ENCODE measurements at regions of chr6 and their contacts with region 1.

Region 1: DNA sequence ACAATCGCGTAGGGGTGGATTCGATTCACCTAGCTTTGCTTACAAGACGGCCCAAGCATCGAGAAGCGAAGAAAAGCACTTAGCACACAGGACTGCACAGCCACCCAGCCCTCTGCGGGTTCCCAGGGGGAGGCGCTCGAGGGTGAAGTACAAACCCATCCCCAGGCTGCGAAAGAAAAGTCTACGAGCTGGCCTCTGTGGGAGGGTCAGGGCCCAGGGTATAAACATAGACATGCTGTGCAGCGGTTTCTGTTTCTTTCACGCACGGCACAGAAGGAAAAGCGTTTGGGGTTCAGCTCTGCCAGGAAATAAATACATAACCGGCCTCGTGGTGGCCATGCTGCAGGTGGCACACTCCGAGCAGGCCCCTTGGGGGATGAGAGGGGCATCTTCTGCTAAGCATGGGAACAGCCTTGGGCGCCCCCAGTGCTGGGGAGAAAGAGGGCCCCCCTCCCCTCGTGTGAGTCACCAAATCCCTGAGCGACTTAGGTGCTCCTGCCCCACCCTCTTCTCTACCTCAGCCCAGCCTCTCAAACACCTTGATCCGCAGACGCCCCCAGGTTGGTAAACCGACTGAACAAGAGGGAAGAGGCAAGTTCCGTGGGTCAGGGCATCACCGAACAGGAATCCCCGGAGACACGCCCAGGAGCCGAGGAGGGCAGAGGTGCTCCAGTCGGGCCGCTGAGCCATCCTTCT is 91.6 kb upstream of the RIPOR2 start:
- DNase-seq: peak; percentile 92
- H3K4me3 Mint-ChIP-seq: peak overlapping the region; percentile 70
- H3K27ac Mint-ChIP-seq: peak overlapping the region; percentile 96
- H3K4me1 Mint-ChIP-seq: peaks cover 75% of the 10 kb centered on the region
- H3K27me3 Mint-ChIP-seq: no peaks in the 10 kb centered on the region

Region 2: GRCh38 chr6:24855395-24856245 is 171.7 kb before region 1 on chr6:
- CTCF ChIA-PET with region 1: interaction called, 51 read pairs
- POLR2A ChIA-PET with region 1: interaction called, 4 read pairs
- intact Hi-C with region 1: no loop called
- DNase-seq: peak; percentile 81
- H3K4me3 Mint-ChIP-seq: peak overlapping the region; percentile 17
- H3K27ac Mint-ChIP-seq: peak overlapping the region; percentile 89
- H3K4me1 Mint-ChIP-seq: peaks cover 56% of the 10 kb centered on the region
- H3K27me3 Mint-ChIP-seq: no peaks in the 10 kb centered on the region

Region 3: GRCh38 chr6:24974182-24975171 is 52.9 kb before region 1 on chr6:
- CTCF ChIA-PET with region 1: interaction called, 13 read pairs
- POLR2A ChIA-PET with region 1: no interaction called
- intact Hi-C with region 1: no loop called
- DNase-seq: peak; percentile 69
- H3K4me3 Mint-ChIP-seq: peak overlapping the region; percentile 48
- H3K27ac Mint-ChIP-seq: peak overlapping the region; percentile 90
- H3K4me1 Mint-ChIP-seq: peaks cover 64% of the 10 kb centered on the region
- H3K27me3 Mint-ChIP-seq: no peaks in the 10 kb centered on the region

Region 4: DNA sequence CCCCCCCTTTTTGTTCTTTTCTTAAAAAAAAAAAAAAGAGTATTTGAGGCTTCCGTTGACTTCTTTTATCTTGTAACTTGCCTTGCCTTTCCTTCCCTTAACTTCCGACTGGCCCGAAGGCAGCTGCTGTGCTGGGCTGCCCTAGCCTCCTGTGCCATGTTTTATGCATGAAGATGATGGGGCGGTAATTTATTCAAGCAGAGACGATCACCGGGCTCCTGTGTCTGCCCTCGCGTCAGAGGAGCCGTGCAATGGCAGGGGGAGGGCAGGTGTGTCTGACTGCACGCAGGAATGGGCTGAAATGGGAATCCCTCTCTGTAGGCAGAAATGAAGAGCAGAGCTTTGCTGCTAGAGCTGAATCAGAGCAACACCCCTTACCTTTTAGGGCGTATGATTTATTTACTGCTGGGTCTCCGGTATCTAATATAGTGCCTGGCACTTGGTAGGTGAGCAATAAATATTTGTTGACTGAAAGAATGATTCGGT is 14.7 kb after region 1 on chr6:
- CTCF ChIA-PET with region 1: interaction called, 110 read pairs
- POLR2A ChIA-PET with region 1: interaction called, 44 read pairs
- intact Hi-C with region 1: loop called (anchors 1 kb)
- DNase-seq: peak; percentile 69
- H3K4me3 Mint-ChIP-seq: peak overlapping the region; percentile 91
- H3K27ac Mint-ChIP-seq: peak overlapping the region; percentile 97
- H3K4me1 Mint-ChIP-seq: peaks cover 60% of the 10 kb centered on the region
- H3K27me3 Mint-ChIP-seq: no peaks in the 10 kb centered on the region

Region 5: GRCh38 chr6:25061289-25061936 is 34.0 kb after region 1 on chr6:
- CTCF ChIA-PET with region 1: interaction called, 55 read pairs
- POLR2A ChIA-PET with region 1: interaction called, 11 read pairs
- intact Hi-C with region 1: loop called (anchors 1 kb)
- DNase-seq: no peak
- H3K4me3 Mint-ChIP-seq: no peak overlapping the region
- H3K27ac Mint-ChIP-seq: no peak overlapping the region
- H3K4me1 Mint-ChIP-seq: peaks cover 19% of the 10 kb centered on the region
- H3K27me3 Mint-ChIP-seq: no peaks in the 10 kb centered on the region

Region 6: GRCh38 chr6:25173951-25174474 is 146.6 kb after region 1 on chr6:
- CTCF ChIA-PET with region 1: no interaction called
- POLR2A ChIA-PET with region 1: no interaction called
- intact Hi-C with region 1: loop called (anchors 5 kb)
- DNase-seq: no peak
- H3K4me3 Mint-ChIP-seq: no peak overlapping the region
- H3K27ac Mint-ChIP-seq: no peak overlapping the region
- H3K4me1 Mint-ChIP-seq: peaks cover 42% of the 10 kb centered on the region
- H3K27me3 Mint-ChIP-seq: no peaks in the 10 kb centered on the region

Measured in activated CD4-positive, alpha-beta memory T cell treated with anti-CD3 and anti-CD28 coated beads for 36 hours (primary cell).